ENCODE measurements at regions of chr2 and their contacts with region 1.

Region 1: GRCh38 chr2:46029332-46029811 is 267.8 kb upstream of the EPAS1 start:
- DNase-seq: no peak
- H3K4me3 ChIP-seq: no peak overlapping the region
- H3K27me3 ChIP-seq: no peaks in the 10 kb centered on the region
- CTCF ChIP-seq: peak; percentile 7; the same call in 1 of the 2 replicates

Region 2: GRCh38 chr2:46002507-46002883 is 26.9 kb before region 1 on chr2:
- CTCF ChIA-PET with region 1: no interaction called
- POLR2A ChIA-PET with region 1: no interaction called
- DNase-seq: no peak
- H3K4me3 ChIP-seq: no peak overlapping the region
- H3K27me3 ChIP-seq: no peaks in the 10 kb centered on the region
- CTCF ChIP-seq: no peak

Region 3: GRCh38 chr2:46119453-46119852 is 90.1 kb after region 1 on chr2:
- CTCF ChIA-PET with region 1: no interaction called
- POLR2A ChIA-PET with region 1: no interaction called
- DNase-seq: peak; percentile 85
- H3K4me3 ChIP-seq: no peak overlapping the region
- H3K27me3 ChIP-seq: no peaks in the 10 kb centered on the region
- CTCF ChIP-seq: no peak

Region 4: GRCh38 chr2:46335391-46336282 is 306.3 kb after region 1 on chr2:
- CTCF ChIA-PET with region 1: no interaction called
- POLR2A ChIA-PET with region 1: interaction called, 12 read pairs
- DNase-seq: no peak
- H3K4me3 ChIP-seq: peak overlapping the region; percentile 28
- H3K27me3 ChIP-seq: no peaks in the 10 kb centered on the region
- CTCF ChIP-seq: no peak